ENCODE measurements at regions of chr7 and their contacts with region 1.

Region 1: GRCh38 chr7:78141522-78142281 is 343.1 kb downstream of the PHTF2 start:
- DNase-seq: no peak
- H3K4me3 ChIP-seq: no peak overlapping the region
- H3K27ac ChIP-seq: no peak overlapping the region
- H3K4me1 ChIP-seq: no peaks in the 10 kb centered on the region
- H3K27me3 ChIP-seq: no peaks in the 10 kb centered on the region
- CTCF ChIP-seq: no peak
- EP300 ChIP-seq: no peak
- POLR2A ChIP-seq: no peak

Region 2: DNA sequence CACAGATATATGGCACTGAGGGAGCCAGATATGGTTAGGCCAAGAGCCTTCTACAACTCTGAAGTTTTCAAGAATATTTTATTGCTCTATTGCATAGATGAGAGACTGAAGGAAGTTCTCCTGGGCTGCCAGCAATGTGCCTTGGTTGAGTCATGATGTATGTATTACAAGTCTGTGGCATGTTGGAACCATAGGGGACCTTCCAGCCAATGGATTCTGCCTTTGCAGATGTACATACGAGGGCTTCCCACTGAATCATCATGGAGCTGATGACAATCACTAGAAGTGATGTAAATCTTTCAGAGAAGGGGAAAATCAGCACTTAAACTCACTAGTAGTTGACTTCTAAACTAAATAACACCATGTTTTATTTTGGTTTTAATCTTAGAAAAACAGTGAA is 76.3 kb after region 1 on chr7:
- intact Hi-C with region 1: loop called (anchors 10 kb)
- DNase-seq: no peak
- H3K4me3 ChIP-seq: no peak overlapping the region
- H3K27ac ChIP-seq: no peak overlapping the region
- H3K4me1 ChIP-seq: no peaks in the 10 kb centered on the region
- H3K27me3 ChIP-seq: no peaks in the 10 kb centered on the region
- CTCF ChIP-seq: no peak
- EP300 ChIP-seq: no peak
- POLR2A ChIP-seq: no peak